Heart left ventricle (tissue), 16 donors: ENCODE measurements at regions of chr16 and their contacts with region 1.

Region 1: GRCh38 chr16:17296431-17296830 is 174.3 kb downstream of the XYLT1 start:
- DNase-seq: peak in 4 of 5 donors; percentile 18 to 65 (median 30)
- ATAC-seq: peak in 3 of 4 donors; percentile 73 to 81 (median 79)
- H3K4me3 ChIP-seq: no peak overlapping the region
- H3K27ac ChIP-seq: peak overlapping the region in 5 of 12 donors; percentile 39 to 63 (median 43)
- H3K4me1 ChIP-seq: peaks cover 0 to 20% (median 6%) of the 10 kb centered on the region in 12 donors
- H3K27me3 ChIP-seq: no peaks in the 10 kb centered on the region
- CTCF ChIP-seq: no peak
- POLR2A ChIP-seq: no peak

Region 2: GRCh38 chr16:17334096-17334495 is 37.7 kb after region 1 on chr16:
- intact Hi-C with region 1: no loop called
- DNase-seq: peak in 1 of 5 donors; percentile 66
- ATAC-seq: peak; percentile 45 to 79 (median 58)
- H3K4me3 ChIP-seq: no peak overlapping the region
- H3K27ac ChIP-seq: peak overlapping the region in 2 of 12 donors; percentile 26 to 80
- H3K4me1 ChIP-seq: peaks cover 0 to 13% (median 0%) of the 10 kb centered on the region in 12 donors
- H3K27me3 ChIP-seq: no peaks in the 10 kb centered on the region
- CTCF ChIP-seq: no peak
- POLR2A ChIP-seq: no peak

Region 3: DNA sequence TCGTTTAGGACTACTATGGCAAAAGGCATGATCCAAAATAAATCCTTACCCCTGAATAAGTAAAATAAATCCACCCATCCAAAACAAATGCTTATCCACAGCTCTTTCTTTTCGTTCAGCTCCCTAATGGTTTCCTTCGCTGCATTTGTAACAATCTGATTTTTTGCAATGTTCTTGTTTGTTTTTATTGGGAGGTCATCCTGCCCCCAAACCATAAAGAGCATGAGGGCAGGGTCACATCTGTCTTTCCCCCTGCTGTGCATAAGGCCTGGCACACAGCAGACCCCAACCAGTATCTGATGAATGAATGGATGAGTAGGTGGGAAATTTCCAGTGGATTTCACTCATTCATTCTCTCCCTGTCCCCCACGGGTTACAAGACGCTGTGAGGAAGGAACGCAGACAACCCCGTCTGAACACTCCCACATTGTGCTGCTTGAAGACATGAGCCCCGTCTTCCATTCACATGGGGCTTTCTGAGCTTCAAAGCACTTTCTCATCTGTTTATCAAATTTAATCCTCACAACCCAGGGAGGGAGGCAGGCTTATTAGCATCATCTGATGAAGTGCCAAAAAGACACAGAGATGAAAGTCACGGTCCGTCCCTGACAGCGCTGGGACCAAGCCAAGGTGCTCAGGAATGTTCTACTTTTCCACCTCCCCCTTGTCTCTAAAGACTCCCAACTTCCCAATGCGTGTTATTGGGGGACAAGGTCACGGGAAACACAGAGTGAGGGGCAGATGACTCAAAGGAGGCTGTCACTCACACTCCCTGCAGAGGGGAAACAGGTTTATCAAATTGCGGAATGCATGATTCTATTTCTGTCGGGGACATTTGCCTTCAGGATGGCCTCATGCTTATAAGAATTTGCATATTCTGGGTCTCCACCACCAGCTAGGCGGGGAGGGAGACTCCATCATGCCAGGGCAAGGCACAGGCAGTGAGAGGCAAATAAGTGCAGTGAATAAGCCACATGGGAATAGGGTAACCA is 163.4 kb after region 1 on chr16:
- intact Hi-C with region 1: loop called in 1 of 10 experiments (anchors 5 kb)
- DNase-seq: no peak
- ATAC-seq: peak in 2 of 4 donors; percentile 31 to 51
- H3K4me3 ChIP-seq: peak overlapping the region in 1 of 12 donors; percentile 8
- H3K27ac ChIP-seq: no peak overlapping the region
- H3K4me1 ChIP-seq: peaks cover 0 to 23% (median 6%) of the 10 kb centered on the region in 12 donors
- H3K27me3 ChIP-seq: peaks cover 0 to 4% (median 0%) of the 10 kb centered on the region in 9 donors
- CTCF ChIP-seq: no peak
- POLR2A ChIP-seq: no peak